ENCODE measurements at regions of chr1 and their contacts with region 1.

Region 1: GRCh38 chr1:205321164-205321958 is at the start of gene NUAK2:
- DNase-seq: peak; percentile 94
- H3K4me3 ChIP-seq: peak within 1 kb of the TSS; percentile 88
- H3K27ac ChIP-seq: no peak within 1 kb of the TSS
- H3K4me1 ChIP-seq: peaks cover 17% of the 10 kb centered on the region
- H3K27me3 ChIP-seq: no peaks in the 10 kb centered on the region
- total RNA-seq, gene NUAK2: 3.0 and 4.4 TPM in 2 replicates

Region 2: GRCh38 chr1:205275133-205275532 is 46.2 kb before region 1 on chr1:
- in situ Hi-C with region 1: loop called (anchors 5 kb)
- DNase-seq: no peak
- H3K4me3 ChIP-seq: no peak overlapping the region
- H3K27ac ChIP-seq: no peak overlapping the region
- H3K4me1 ChIP-seq: peaks cover 9% of the 10 kb centered on the region
- H3K27me3 ChIP-seq: no peaks in the 10 kb centered on the region

Measured in GM23248 (cell line).